ENCODE measurements at regions of chr5 and their contacts with region 1.

Region 1: DNA sequence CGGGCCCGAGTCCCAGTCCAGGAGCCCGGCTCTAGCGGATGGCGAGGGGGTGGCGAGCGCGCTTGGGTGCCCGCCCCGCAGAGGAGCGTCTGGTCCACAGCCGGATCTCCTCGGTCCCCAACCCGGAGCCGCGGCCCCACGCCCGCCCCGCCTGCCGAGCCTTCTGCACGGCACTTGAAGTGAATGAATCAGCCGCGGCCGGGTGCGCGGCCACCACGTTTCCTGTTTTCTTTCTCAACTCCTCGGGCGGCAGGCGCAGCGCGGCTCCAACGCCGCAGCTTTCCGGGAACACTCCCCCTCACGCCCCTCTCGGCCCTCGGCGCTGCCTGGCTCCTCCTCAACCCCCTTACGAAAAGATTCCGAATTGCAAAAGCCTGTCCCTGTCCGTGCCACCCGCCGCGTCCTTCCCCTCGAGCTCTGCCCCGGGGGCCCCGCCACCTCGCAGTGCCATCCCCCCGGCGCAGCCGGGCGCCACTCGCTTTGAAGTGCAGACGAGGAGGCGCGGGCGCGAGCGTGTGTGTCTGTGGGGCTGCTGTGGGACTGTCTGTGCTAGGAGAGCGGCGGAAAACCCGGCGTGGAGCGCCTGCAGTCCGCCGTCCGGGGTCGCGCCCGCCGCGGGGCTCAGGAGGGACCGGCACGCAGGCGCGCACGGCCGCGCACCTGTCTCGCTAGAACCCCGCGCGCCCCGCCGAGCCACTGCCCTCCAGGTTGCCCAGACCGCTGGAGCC is 456.6 kb downstream of the RAB3C start:
- DNase-seq: peak; percentile 91 to 95
- ATAC-seq: peak; percentile 86
- H3K4me3 ChIP-seq: peak overlapping the region; percentile 29 to 65
- H3K27ac ChIP-seq: no peak overlapping the region
- H3K4me1 ChIP-seq: peaks cover 0 to 5% of the 10 kb centered on the region in 2 donors
- H3K27me3 ChIP-seq: no peaks in the 10 kb centered on the region

Region 2: DNA sequence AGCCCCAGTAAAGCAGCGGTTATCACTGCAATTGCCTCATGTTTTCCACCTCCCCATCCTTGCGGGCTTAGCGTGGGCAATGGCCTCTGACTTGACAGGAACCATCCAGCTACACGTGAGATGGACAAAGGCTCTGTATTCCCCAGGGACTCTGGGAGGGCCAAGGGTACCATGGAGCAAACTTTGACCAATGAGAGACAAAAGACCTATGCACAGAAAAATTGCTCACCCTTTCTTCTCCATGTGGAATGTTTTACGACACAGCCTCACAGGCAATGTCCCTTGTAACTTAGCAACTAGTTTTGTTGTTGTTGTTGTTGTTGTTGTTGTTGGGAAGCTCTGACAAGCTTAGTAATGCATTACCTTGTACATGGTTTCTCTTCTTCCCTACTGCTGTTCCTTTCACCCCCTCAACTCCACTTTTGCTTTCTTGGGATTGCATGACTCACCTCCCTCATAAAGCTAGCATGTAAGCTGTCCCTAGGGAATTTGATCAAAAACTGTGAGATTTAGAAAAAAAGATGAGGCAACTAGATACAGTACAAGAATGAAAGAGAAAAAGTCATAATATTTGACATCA is 94.3 kb after region 1 on chr5:
- intact Hi-C with region 1: loop called in 1 of 2 experiments (anchors 10 kb)
- DNase-seq: no peak
- ATAC-seq: peak; percentile 30
- H3K4me3 ChIP-seq: no peak overlapping the region
- H3K27ac ChIP-seq: no peak overlapping the region
- H3K4me1 ChIP-seq: peaks cover 0 to 8% of the 10 kb centered on the region in 2 donors
- H3K27me3 ChIP-seq: no peaks in the 10 kb centered on the region

Region 3: DNA sequence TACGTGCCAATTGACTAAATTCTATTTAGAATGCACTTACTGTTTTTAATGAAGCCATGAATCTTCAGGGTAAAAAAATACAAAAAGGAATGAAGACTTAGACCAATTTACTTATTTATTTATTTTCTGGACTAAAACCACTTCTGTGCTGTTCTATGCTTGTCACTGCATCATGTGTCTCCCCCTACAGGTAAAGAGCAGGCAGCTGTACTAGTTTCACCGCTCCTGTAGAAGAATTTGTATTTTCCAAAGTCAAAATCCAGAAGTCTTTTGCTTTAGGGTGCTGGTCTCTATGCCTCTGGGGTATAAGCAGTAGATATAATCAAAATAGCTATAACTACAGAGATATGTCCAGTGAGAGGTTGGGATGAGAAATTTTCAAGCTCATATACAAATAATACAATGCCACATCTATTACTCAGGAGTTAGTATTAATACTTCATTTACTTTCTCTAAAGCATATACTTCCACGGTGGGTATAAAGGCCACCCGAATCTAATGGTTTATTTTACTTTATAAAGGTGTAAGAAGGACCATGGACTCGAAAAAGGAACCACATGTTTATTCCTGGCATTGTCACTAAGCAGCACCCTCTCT is 134.9 kb after region 1 on chr5:
- intact Hi-C with region 1: loop called in 1 of 2 experiments (anchors 10 kb)
- DNase-seq: no peak
- ATAC-seq: peak; percentile 69
- H3K4me3 ChIP-seq: no peak overlapping the region
- H3K27ac ChIP-seq: no peak overlapping the region
- H3K4me1 ChIP-seq: no peaks in the 10 kb centered on the region
- H3K27me3 ChIP-seq: no peaks in the 10 kb centered on the region